Naive thymus-derived CD4-positive, alpha-beta T cell (primary cell): ENCODE measurements at regions of chr17 and their contacts with region 1.

Region 1: DNA sequence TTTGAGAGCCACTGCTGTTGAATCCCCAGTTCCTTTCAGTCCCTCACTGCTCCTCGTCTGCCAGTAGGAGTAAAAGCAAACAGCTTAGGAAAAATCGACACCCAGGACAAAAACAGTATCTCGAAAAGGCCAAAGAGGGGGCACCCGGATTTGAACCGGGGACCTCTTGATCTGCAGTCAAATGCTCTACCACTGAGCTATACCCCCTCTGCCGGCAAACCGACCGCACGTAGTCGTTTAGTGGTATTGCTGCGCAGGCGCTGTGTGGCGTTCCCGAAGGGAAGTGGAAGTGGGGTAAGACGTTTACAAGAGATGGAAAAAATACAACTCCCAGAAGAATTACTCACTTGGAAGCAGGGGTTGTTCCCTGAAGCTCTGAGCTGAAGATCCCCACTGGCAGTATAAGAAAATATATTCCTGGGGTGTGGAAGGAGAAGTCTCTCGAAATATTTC is 2.2 kb upstream of the PLXDC1 start:
- DNase-seq: peak; percentile 87 to 96 (median 91)
- ATAC-seq: peak; percentile 74
- H3K4me3 ChIP-seq: peak overlapping the region; percentile 91
- H3K4me3 Mint-ChIP-seq: peak overlapping the region; percentile 93 to 100 (median 98)
- H3K27ac ChIP-seq: peak overlapping the region; percentile 61
- H3K27ac Mint-ChIP-seq: peak overlapping the region; percentile 92 to 100 (median 98)
- H3K4me1 ChIP-seq: peaks cover 10 to 26% of the 10 kb centered on the region in 2 donors
- H3K4me1 Mint-ChIP-seq: peaks cover 29 to 51% (median 38%) of the 10 kb centered on the region in 7 donors
- H3K27me3 ChIP-seq: no peaks in the 10 kb centered on the region
- H3K27me3 Mint-ChIP-seq: peaks cover 0 to 54% (median 4%) of the 10 kb centered on the region in 5 donors

Region 2: GRCh38 chr17:38752119-38752929 is 401.3 kb before region 1 on chr17 and contains the start of gene PSMB3:
- CTCF ChIA-PET with region 1: no interaction called
- POLR2A ChIA-PET with region 1: no interaction called
- intact Hi-C with region 1: loop called (anchors 2 kb)
- DNase-seq: peak; percentile 76 to 98 (median 96)
- ATAC-seq: peak; percentile 90
- H3K4me3 ChIP-seq: peak within 1 kb of the TSS; percentile 95
- H3K4me3 Mint-ChIP-seq: peak within 1 kb of the TSS; percentile 89 to 100 (median 98)
- H3K27ac ChIP-seq: peak within 1 kb of the TSS; percentile 83
- H3K27ac Mint-ChIP-seq: peak within 1 kb of the TSS; percentile 91 to 99 (median 97)
- H3K4me1 ChIP-seq: peaks cover 31 to 48% of the 10 kb centered on the region in 2 donors
- H3K4me1 Mint-ChIP-seq: peaks cover 37 to 56% (median 44%) of the 10 kb centered on the region in 7 donors
- H3K27me3 ChIP-seq: peaks cover 6 to 9% of the 10 kb centered on the region in 2 donors
- H3K27me3 Mint-ChIP-seq: peaks cover 12 to 32% (median 20%) of the 10 kb centered on the region in 5 donors
- total RNA-seq, gene PSMB3: 60.8 to 287 (median 92.1) TPM

Region 3: GRCh38 chr17:38841141-38841485 is 312.5 kb before region 1 on chr17:
- CTCF ChIA-PET with region 1: no interaction called
- POLR2A ChIA-PET with region 1: no interaction called
- intact Hi-C with region 1: no loop called
- DNase-seq: no peak
- ATAC-seq: peak; percentile 53
- H3K4me3 ChIP-seq: peak overlapping the region; percentile 20
- H3K4me3 Mint-ChIP-seq: peak overlapping the region in 7 of 10 donors; percentile 32 to 75 (median 65)
- H3K27ac ChIP-seq: peak overlapping the region; percentile 15
- H3K27ac Mint-ChIP-seq: peak overlapping the region in 2 of 9 donors; percentile 17 to 52
- H3K4me1 ChIP-seq: no peaks in the 10 kb centered on the region
- H3K4me1 Mint-ChIP-seq: no peaks in the 10 kb centered on the region
- H3K27me3 ChIP-seq: no peaks in the 10 kb centered on the region
- H3K27me3 Mint-ChIP-seq: no peaks in the 10 kb centered on the region

Region 4: DNA sequence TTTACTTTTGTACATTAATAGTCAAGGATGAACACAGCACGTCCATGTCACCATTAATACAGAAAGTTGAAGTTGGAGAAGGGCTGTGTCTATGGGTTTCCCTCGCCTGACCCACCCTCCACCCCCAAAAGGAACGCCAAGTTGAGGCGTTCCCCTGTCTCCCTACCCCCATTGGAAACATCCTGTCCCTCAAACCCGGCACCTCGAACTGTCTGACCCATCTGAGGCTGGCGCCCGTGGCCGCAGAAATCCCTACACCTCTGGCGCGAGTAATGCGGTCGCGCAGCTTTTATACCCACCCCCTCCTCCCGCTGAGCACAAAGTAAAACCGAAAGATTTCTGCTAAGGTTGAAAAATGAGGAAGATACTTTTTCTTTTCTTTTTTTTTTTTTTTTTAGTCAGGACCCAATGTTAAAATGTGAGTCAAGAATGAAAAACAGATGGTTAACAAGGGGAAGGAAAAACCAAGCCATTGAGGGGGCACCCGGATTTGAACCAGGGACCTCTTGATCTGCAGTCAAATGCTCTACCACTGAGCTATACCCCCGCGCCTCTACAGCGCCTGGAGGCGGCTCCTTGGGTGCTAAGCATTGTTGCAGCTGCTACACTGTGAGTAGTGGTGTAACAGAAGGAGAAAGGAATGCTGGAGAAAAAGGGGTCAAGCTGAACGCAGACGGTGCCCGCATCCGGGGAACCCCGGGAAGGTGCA is 284.7 kb before region 1 on chr17:
- CTCF ChIA-PET with region 1: interaction called, 18 read pairs
- POLR2A ChIA-PET with region 1: interaction called, 21 read pairs
- intact Hi-C with region 1: loop called (anchors 1 kb)
- DNase-seq: peak; percentile 82 to 93 (median 90)
- ATAC-seq: peak; percentile 67
- H3K4me3 ChIP-seq: peak overlapping the region; percentile 98
- H3K4me3 Mint-ChIP-seq: peak overlapping the region; percentile 94 to 100 (median 99)
- H3K27ac ChIP-seq: peak overlapping the region; percentile 88
- H3K27ac Mint-ChIP-seq: peak overlapping the region; percentile 90 to 98 (median 97)
- H3K4me1 ChIP-seq: peaks cover 35 to 38% of the 10 kb centered on the region in 2 donors
- H3K4me1 Mint-ChIP-seq: peaks cover 33 to 49% (median 48%) of the 10 kb centered on the region in 7 donors
- H3K27me3 ChIP-seq: no peaks in the 10 kb centered on the region
- H3K27me3 Mint-ChIP-seq: peaks cover 0 to 6% (median 0%) of the 10 kb centered on the region in 5 donors

Region 5: DNA sequence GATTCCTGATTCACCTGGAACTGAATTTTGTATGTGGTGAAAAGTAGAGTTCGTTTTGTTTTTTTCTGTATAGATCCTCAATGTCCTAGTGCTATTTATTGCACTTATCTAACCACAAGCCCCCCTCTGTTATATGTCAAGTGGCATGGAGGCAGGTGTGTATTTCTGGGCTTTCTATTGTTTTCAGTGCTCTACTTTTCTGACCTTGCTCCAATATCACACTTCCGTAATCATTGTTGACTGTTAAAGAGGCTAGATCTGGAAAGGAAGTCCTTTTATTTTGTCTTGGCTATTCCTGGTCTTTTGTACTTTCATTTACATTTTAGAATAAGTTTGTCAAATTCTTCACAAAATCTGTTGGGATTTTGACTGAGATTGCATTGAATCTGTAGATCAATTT is 159.6 kb before region 1 on chr17:
- CTCF ChIA-PET with region 1: no interaction called
- POLR2A ChIA-PET with region 1: no interaction called
- intact Hi-C with region 1: no loop called
- DNase-seq: no peak
- ATAC-seq: no peak
- H3K4me3 ChIP-seq: no peak overlapping the region
- H3K4me3 Mint-ChIP-seq: no peak overlapping the region
- H3K27ac ChIP-seq: no peak overlapping the region
- H3K27ac Mint-ChIP-seq: no peak overlapping the region
- H3K4me1 ChIP-seq: no peaks in the 10 kb centered on the region
- H3K4me1 Mint-ChIP-seq: peaks cover 0 to 2% (median 0%) of the 10 kb centered on the region in 7 donors
- H3K27me3 ChIP-seq: no peaks in the 10 kb centered on the region
- H3K27me3 Mint-ChIP-seq: peaks cover 0 to 8% (median 0%) of the 10 kb centered on the region in 5 donors

Region 6: DNA sequence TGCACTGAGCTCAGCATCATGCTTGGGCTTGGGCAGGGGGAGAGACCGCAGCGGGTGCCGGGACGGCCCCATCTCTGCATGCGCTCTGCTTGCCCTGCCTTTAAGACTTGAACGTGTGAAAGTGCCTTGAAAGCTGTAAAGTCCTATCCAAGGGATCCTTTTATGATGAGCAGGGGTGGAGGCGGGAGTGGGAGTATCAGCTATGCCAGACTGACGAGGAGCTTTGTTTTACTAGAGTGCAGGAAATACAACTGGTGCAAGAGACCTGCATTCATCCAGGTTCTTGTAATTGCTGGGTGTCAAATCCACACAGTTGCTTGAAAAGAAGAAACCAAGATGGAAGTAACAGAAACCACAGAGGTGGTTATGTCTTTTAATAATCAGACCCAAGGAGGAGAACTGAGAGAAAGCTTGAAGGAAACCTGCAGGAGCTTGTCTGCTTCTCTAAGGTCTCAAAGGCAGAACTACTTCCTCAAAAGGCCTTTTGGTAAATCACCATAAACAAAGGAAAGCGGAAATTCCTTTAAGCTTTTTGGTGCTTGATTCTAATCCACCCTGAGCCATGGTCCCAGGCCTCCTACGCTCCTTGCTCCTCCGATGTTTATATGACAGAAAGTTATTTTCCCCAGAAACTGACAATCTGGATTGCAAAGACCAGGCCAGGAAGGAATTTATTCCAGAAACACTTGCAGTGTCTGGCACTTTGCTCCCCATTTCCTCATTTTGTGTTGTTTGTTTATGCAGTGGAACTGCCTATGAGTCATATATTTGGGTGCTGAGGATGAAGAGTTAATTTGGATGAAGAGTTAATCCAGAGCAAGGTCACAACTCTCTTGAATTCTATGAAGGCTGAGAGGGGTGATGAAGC is 135.1 kb before region 1 on chr17:
- CTCF ChIA-PET with region 1: interaction called, 7 read pairs
- POLR2A ChIA-PET with region 1: interaction called, 13 read pairs
- intact Hi-C with region 1: no loop called
- DNase-seq: peak in 8 of 9 donors; percentile 16 to 30 (median 22)
- ATAC-seq: peak; percentile 22
- H3K4me3 ChIP-seq: peak overlapping the region; percentile 8
- H3K4me3 Mint-ChIP-seq: peak overlapping the region; percentile 21 to 74 (median 62)
- H3K27ac ChIP-seq: peak overlapping the region; percentile 37
- H3K27ac Mint-ChIP-seq: peak overlapping the region; percentile 71 to 97 (median 92)
- H3K4me1 ChIP-seq: peaks cover 0 to 38% of the 10 kb centered on the region in 2 donors
- H3K4me1 Mint-ChIP-seq: peaks cover 23 to 50% (median 40%) of the 10 kb centered on the region in 7 donors
- H3K27me3 ChIP-seq: no peaks in the 10 kb centered on the region
- H3K27me3 Mint-ChIP-seq: no peaks in the 10 kb centered on the region

Region 7: DNA sequence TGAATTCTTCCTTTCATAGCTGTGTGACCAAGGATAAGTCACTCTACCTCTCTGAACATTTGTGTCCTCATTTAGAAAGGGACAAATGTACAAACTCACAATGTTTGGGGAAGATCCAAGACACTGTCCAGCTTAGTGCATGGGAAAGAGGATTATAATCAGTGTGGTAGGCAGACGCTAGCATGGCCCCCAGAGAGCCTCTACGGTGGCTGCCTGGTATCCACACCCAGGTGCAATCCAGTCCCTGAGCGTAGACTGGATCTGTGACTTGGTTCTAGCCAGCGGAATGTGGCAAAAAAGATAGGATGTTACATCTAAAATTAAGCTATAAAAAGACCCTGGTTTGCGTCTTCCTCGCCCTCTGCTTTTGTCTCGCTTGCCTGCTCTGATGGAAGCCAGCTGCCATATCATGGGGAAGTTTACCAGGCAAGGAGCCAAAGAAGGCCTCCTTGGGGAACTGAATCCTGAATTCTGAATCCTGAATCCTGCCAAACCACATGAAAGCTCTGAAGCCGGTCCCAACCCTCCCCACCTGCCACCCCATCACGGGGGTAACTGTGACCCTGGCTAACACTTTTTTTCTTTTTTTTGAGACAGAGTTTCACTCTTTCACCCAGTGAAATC is 53.9 kb before region 1 on chr17:
- CTCF ChIA-PET with region 1: interaction called, 38 read pairs
- POLR2A ChIA-PET with region 1: interaction called, 13 read pairs
- intact Hi-C with region 1: loop called in 1 of 2 experiments (anchors 1 kb)
- DNase-seq: no peak
- ATAC-seq: no peak
- H3K4me3 ChIP-seq: no peak overlapping the region
- H3K4me3 Mint-ChIP-seq: peak overlapping the region in 1 of 10 donors; percentile 48
- H3K27ac ChIP-seq: no peak overlapping the region
- H3K27ac Mint-ChIP-seq: peak overlapping the region in 6 of 9 donors; percentile 8 to 95 (median 84)
- H3K4me1 ChIP-seq: peaks cover 25 to 70% of the 10 kb centered on the region in 2 donors
- H3K4me1 Mint-ChIP-seq: peaks cover 32 to 81% (median 75%) of the 10 kb centered on the region in 7 donors
- H3K27me3 ChIP-seq: no peaks in the 10 kb centered on the region
- H3K27me3 Mint-ChIP-seq: peaks cover 0 to 3% (median 0%) of the 10 kb centered on the region in 5 donors

Region 8: DNA sequence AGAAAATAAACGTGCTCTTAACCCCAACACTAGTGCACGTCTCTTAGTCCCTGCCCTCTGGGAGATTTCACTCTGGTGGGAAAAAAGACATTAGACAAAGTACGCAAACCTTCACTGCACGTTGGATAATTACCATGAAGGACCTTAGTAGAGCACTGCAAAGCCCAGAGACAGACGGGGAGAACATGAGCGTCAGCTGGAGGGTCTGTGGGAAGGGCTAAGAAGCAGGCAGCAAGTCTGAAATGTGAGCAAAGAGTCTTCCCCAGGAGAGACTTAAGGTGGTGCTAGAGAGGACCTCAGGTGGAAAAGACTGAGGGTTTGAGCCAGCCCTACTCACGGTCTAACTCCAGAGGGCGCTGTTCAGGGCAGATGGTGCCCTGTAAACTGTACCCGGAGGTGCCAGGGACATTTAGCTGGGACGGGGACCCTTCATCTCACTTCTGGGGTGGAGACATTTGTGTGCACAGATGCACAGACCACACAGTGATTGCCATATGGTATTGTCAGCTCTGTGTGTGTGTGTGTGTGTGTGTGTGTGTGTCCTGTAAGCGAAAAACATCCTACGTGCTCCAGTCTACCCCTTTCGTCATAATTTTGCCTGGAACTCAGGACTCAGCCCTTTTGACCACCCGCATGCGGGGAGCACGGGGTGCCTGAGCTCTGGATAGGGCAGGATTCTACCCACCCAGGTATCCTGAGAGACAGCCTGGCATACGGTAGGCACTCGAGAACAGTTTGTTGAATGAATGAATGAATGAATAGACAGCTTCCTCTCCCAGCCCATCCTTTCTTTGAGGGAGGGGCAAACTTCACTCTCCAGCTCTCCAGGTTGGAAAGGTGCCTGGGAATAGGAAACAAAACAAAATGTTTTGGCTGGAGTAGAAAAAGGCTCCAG is 82.2 kb after region 1 on chr17:
- CTCF ChIA-PET with region 1: interaction called, 9 read pairs
- POLR2A ChIA-PET with region 1: interaction called, 4 read pairs
- intact Hi-C with region 1: loop called in 1 of 2 experiments (anchors 5 kb)
- DNase-seq: peak in 7 of 9 donors; percentile 35 to 62 (median 51)
- ATAC-seq: peak; percentile 57
- H3K4me3 ChIP-seq: no peak overlapping the region
- H3K4me3 Mint-ChIP-seq: peak overlapping the region in 4 of 10 donors; percentile 0 to 51 (median 8)
- H3K27ac ChIP-seq: no peak overlapping the region
- H3K27ac Mint-ChIP-seq: peak overlapping the region in 8 of 9 donors; percentile 21 to 89 (median 76)
- H3K4me1 ChIP-seq: peaks cover 33 to 43% of the 10 kb centered on the region in 2 donors
- H3K4me1 Mint-ChIP-seq: peaks cover 20 to 45% (median 40%) of the 10 kb centered on the region in 7 donors
- H3K27me3 ChIP-seq: no peaks in the 10 kb centered on the region
- H3K27me3 Mint-ChIP-seq: peaks cover 0 to 13% (median 9%) of the 10 kb centered on the region in 5 donors